CD8-positive, alpha-beta T cell (primary cell): ENCODE measurements at regions of chr16 and their contacts with region 1.

Region 1: GRCh38 chr16:3059000-3059722 is 6.3 kb upstream of the IL32 start:
- DNase-seq: peak; percentile 74 to 95 (median 87)
- ATAC-seq: peak; percentile 87
- H3K4me3 ChIP-seq: peak overlapping the region; percentile 84 to 85
- H3K4me3 Mint-ChIP-seq: peak overlapping the region; percentile 86
- H3K27ac ChIP-seq: peak overlapping the region; percentile 60 to 86
- H3K27ac Mint-ChIP-seq: peak overlapping the region; percentile 86
- H3K4me1 ChIP-seq: peaks cover 45% of the 10 kb centered on the region
- H3K4me1 Mint-ChIP-seq: peaks cover 49% of the 10 kb centered on the region
- H3K27me3 ChIP-seq: no peaks in the 10 kb centered on the region
- H3K27me3 Mint-ChIP-seq: no peaks in the 10 kb centered on the region
- CTCF ChIP-seq: peak; percentile 88

Region 2: DNA sequence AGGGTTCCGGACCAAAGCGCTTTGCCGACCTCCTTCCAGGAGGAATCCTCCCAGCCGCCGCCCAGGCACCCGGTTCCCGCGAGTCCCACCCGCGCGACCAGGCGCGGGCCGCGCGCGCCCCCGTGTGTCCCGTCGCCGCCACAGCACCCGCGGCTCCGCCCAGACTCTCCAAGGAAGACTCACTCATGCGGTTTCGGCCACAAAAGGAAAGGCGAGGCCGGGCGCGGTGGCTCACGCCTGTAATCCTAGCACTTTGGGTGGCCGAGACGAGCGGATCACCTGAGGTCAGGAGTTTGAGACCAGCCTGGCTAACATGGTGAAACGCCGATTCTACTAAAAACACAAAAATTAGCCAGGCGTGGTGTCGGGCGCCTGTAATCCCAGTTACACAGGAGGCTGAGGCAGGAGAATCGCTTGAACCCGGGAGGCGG is 75.4 kb before region 1 on chr16:
- CTCF ChIA-PET with region 1: no interaction called
- POLR2A ChIA-PET with region 1: no interaction called
- intact Hi-C with region 1: no loop called
- DNase-seq: peak; percentile 33 to 78 (median 64)
- ATAC-seq: peak; percentile 47
- H3K4me3 ChIP-seq: no peak overlapping the region
- H3K4me3 Mint-ChIP-seq: no peak overlapping the region
- H3K27ac ChIP-seq: no peak overlapping the region
- H3K27ac Mint-ChIP-seq: no peak overlapping the region
- H3K4me1 ChIP-seq: peaks cover 14% of the 10 kb centered on the region
- H3K4me1 Mint-ChIP-seq: peaks cover 16% of the 10 kb centered on the region
- H3K27me3 ChIP-seq: peaks cover 0 to 7% of the 10 kb centered on the region in 2 experiments
- H3K27me3 Mint-ChIP-seq: no peaks in the 10 kb centered on the region
- CTCF ChIP-seq: peak; percentile 97

Region 3: GRCh38 chr16:3023669-3024478 is 35.3 kb before region 1 on chr16 and contains the starts of genes HCFC1R1 and THOC6:
- CTCF ChIA-PET with region 1: interaction called, 33 read pairs
- POLR2A ChIA-PET with region 1: interaction called, 3 read pairs
- intact Hi-C with region 1: no loop called
- DNase-seq: peak; percentile 88 to 98 (median 96)
- ATAC-seq: peak; percentile 73
- H3K4me3 ChIP-seq: peak within 1 kb of the TSS; percentile 88 to 90
- H3K4me3 Mint-ChIP-seq: peak within 1 kb of the TSS; percentile 95
- H3K27ac ChIP-seq: peak within 1 kb of the TSS; percentile 70 to 96
- H3K27ac Mint-ChIP-seq: peak within 1 kb of the TSS; percentile 95
- H3K4me1 ChIP-seq: peaks cover 65% of the 10 kb centered on the region
- H3K4me1 Mint-ChIP-seq: peaks cover 49% of the 10 kb centered on the region
- H3K27me3 ChIP-seq: peaks cover 0 to 3% of the 10 kb centered on the region in 2 experiments
- H3K27me3 Mint-ChIP-seq: peaks cover 3% of the 10 kb centered on the region
- CTCF ChIP-seq: no peak
- total RNA-seq, gene HCFC1R1: 6.4 to 7.1 TPM
- total RNA-seq, gene THOC6: 13.1 to 14.0 TPM

Region 4: DNA sequence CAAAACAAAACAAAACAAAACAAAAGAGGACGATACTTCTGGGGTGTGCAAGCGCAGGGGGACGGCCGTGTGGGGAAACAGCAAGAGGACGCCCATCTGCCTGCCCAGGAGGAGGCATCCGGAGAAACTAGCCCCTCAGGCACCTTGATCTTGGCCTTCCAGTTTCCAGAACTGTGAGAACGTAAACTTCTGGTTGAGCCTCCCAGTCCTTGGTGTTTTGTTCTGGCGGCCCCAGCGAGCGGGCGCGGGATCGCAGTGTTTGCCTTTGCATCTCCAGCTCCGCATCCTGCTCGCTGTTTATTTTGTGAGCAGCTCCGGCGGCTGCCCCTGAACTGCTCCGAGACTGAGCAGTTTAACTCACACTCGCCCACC is 13.8 kb before region 1 on chr16:
- CTCF ChIA-PET with region 1: interaction called, 24 read pairs
- POLR2A ChIA-PET with region 1: interaction called, 6 read pairs
- intact Hi-C with region 1: no loop called
- DNase-seq: peak in 5 of 9 experiments; percentile 38 to 56 (median 49)
- ATAC-seq: peak; percentile 69
- H3K4me3 ChIP-seq: peak overlapping the region; percentile 31 to 55
- H3K4me3 Mint-ChIP-seq: peak overlapping the region; percentile 80
- H3K27ac ChIP-seq: no peak overlapping the region
- H3K27ac Mint-ChIP-seq: peak overlapping the region; percentile 22
- H3K4me1 ChIP-seq: peaks cover 20% of the 10 kb centered on the region
- H3K4me1 Mint-ChIP-seq: peaks cover 20% of the 10 kb centered on the region
- H3K27me3 ChIP-seq: peaks cover 26 to 46% of the 10 kb centered on the region in 2 experiments
- H3K27me3 Mint-ChIP-seq: peaks cover 26% of the 10 kb centered on the region
- CTCF ChIP-seq: no peak

Region 5: DNA sequence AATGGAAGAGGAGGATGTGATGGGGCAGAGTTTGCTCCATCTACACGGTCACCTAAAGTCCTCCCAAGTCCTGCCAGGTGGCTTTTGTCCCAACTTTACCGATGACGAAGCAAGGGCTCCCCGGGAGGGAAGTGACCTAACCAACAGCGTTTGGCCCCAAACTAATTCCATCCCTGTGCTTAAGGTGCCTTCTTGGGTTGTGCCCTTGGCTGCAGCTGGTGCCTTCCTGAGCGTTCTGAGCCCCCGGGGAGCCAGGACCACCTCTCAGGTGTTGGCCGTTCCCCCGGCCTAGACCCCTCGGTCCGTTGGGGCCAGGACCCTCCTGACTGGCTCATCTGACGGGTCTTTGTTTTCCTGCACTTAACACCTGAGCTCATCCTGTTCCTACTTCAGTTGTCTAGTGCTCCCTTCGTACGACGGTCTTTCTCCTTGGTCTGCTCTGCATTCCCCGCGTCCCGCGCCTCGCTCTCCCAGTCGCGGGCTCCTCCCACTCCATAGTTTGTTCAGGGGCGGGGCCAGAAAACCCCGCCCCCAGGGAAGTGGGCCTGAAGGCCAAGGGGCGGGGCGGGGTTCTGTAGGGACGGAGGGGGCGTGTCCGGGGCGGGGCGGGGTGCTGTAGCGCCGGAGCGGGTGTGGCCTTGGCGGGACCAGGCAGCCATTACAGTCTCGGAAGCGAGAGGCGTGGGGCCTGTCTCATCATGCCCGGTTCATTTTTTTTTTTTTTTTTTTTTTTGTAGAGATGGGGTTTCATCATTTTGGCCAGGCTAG is 40.8 kb after region 1 on chr16:
- CTCF ChIA-PET with region 1: interaction called, 77 read pairs
- POLR2A ChIA-PET with region 1: interaction called, 4 read pairs
- intact Hi-C with region 1: loop called in 1 of 2 experiments (anchors 1 kb)
- DNase-seq: peak; percentile 65 to 94 (median 88)
- ATAC-seq: peak; percentile 89
- H3K4me3 ChIP-seq: peak overlapping the region; percentile 9 to 38
- H3K4me3 Mint-ChIP-seq: peak overlapping the region; percentile 75
- H3K27ac ChIP-seq: peak overlapping the region in 1 of 2 experiments; percentile 70
- H3K27ac Mint-ChIP-seq: peak overlapping the region; percentile 82
- H3K4me1 ChIP-seq: peaks cover 38% of the 10 kb centered on the region
- H3K4me1 Mint-ChIP-seq: peaks cover 46% of the 10 kb centered on the region
- H3K27me3 ChIP-seq: no peaks in the 10 kb centered on the region
- H3K27me3 Mint-ChIP-seq: no peaks in the 10 kb centered on the region
- CTCF ChIP-seq: no peak

Region 6: DNA sequence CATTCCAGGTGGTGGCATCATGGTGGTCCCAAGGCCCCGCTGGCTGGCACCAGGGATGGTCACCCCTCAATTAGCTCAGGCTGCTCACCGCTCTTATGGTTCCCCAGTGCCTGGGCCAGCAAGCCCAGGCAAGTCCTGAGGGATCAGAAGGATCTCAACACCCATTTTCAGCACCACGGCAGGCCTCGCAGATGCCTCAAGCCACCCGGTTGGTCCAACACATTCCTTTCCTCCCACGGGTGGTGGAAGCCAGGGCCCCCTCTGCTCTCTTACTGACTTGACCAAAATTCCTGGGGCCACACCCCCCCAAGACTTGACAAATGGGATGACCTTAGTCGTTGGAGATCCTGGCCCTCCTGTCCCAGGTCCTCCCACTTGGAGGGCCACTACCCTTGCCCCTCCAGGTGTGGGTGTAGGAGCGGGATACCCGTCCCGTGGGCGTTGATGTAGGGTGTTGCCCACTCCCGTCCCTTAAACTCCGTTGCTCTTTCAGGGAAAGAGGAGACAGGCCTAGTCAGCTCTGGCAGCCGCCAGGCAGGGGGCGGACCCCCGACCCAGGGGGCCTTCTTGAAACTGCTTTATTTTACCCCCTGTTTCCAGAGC is 59.1 kb after region 1 on chr16:
- CTCF ChIA-PET with region 1: interaction called, 11 read pairs
- POLR2A ChIA-PET with region 1: no interaction called
- intact Hi-C with region 1: no loop called
- DNase-seq: no peak
- ATAC-seq: no peak
- H3K4me3 ChIP-seq: no peak overlapping the region
- H3K4me3 Mint-ChIP-seq: no peak overlapping the region
- H3K27ac ChIP-seq: no peak overlapping the region
- H3K27ac Mint-ChIP-seq: no peak overlapping the region
- H3K4me1 ChIP-seq: no peaks in the 10 kb centered on the region
- H3K4me1 Mint-ChIP-seq: peaks cover 1% of the 10 kb centered on the region
- H3K27me3 ChIP-seq: no peaks in the 10 kb centered on the region
- H3K27me3 Mint-ChIP-seq: no peaks in the 10 kb centered on the region
- CTCF ChIP-seq: no peak

Region 7: GRCh38 chr16:3165111-3165822 is 106.1 kb after region 1 on chr16:
- CTCF ChIA-PET with region 1: interaction called, 7 read pairs
- POLR2A ChIA-PET with region 1: interaction called, 4 read pairs
- intact Hi-C with region 1: loop called (anchors 1 kb)
- DNase-seq: no peak
- ATAC-seq: peak; percentile 16
- H3K4me3 ChIP-seq: peak overlapping the region in 1 of 2 experiments; percentile 31
- H3K4me3 Mint-ChIP-seq: peak overlapping the region; percentile 42
- H3K27ac ChIP-seq: peak overlapping the region in 1 of 2 experiments; percentile 36
- H3K27ac Mint-ChIP-seq: peak overlapping the region; percentile 58
- H3K4me1 ChIP-seq: peaks cover 7% of the 10 kb centered on the region
- H3K4me1 Mint-ChIP-seq: peaks cover 11% of the 10 kb centered on the region
- H3K27me3 ChIP-seq: peaks cover 0 to 2% of the 10 kb centered on the region in 2 experiments
- H3K27me3 Mint-ChIP-seq: no peaks in the 10 kb centered on the region
- CTCF ChIP-seq: no peak

Region 8: GRCh38 chr16:3274490-3274889 is 215.3 kb after region 1 on chr16:
- CTCF ChIA-PET with region 1: no interaction called
- POLR2A ChIA-PET with region 1: no interaction called
- intact Hi-C with region 1: no loop called
- DNase-seq: no peak
- ATAC-seq: no peak
- H3K4me3 ChIP-seq: no peak overlapping the region
- H3K4me3 Mint-ChIP-seq: no peak overlapping the region
- H3K27ac ChIP-seq: no peak overlapping the region
- H3K27ac Mint-ChIP-seq: no peak overlapping the region
- H3K4me1 ChIP-seq: no peaks in the 10 kb centered on the region
- H3K4me1 Mint-ChIP-seq: peaks cover 5% of the 10 kb centered on the region
- H3K27me3 ChIP-seq: no peaks in the 10 kb centered on the region
- H3K27me3 Mint-ChIP-seq: no peaks in the 10 kb centered on the region
- CTCF ChIP-seq: no peak